ENCODE measurements at regions of chr16 and their contacts with region 1.

Region 1: DNA sequence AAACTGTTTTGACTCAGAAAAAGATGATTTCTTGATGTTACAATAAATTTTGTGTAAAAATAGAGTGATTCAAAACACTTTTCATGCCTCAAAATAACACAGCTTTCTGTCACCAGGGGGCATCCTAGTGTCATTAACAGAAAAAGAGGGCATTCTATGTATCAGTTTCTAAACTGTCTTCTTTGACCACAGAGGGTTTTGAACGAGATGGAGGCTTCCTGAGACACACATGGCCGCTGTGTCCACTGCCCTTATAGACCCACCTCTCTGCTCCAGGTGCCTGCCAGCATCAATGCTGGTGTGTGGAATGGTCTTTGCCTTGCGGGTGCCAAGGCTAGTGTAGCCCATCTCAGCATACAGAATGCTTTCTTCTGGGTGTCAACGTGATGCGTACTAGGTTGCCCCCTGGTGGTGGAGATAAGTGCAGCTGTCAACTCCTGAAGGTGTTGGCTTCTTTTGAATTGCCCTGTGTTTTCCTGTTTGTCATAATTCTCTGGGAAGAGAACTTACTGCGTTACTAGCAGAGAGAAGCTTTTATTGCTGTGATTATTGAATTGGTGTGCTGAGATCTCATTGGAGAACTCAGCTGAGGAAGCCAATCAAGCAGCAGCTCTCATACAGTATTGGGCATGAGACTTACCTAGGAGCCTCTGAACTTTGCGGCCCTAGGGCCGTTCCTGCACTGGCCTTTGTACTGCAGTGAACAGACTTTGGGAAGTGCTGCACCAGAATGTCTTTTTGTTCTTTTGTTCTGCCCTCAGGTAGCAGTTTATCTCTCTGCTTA is 38.6 kb downstream of the USP10 start:
- DNase-seq: peak; percentile 82 to 86
- H3K4me3 ChIP-seq: no peak overlapping the region
- H3K4me3 Mint-ChIP-seq: no peak overlapping the region
- H3K27ac Mint-ChIP-seq: no peak overlapping the region
- H3K4me1 ChIP-seq: peaks cover 7% of the 10 kb centered on the region; the same call in 1 of the 2 replicates
- H3K4me1 Mint-ChIP-seq: peaks cover 25% of the 10 kb centered on the region
- H3K27me3 ChIP-seq: no peaks in the 10 kb centered on the region
- H3K27me3 Mint-ChIP-seq: no peaks in the 10 kb centered on the region
- CTCF ChIP-seq: peak; percentile 91 to 92

Region 2: DNA sequence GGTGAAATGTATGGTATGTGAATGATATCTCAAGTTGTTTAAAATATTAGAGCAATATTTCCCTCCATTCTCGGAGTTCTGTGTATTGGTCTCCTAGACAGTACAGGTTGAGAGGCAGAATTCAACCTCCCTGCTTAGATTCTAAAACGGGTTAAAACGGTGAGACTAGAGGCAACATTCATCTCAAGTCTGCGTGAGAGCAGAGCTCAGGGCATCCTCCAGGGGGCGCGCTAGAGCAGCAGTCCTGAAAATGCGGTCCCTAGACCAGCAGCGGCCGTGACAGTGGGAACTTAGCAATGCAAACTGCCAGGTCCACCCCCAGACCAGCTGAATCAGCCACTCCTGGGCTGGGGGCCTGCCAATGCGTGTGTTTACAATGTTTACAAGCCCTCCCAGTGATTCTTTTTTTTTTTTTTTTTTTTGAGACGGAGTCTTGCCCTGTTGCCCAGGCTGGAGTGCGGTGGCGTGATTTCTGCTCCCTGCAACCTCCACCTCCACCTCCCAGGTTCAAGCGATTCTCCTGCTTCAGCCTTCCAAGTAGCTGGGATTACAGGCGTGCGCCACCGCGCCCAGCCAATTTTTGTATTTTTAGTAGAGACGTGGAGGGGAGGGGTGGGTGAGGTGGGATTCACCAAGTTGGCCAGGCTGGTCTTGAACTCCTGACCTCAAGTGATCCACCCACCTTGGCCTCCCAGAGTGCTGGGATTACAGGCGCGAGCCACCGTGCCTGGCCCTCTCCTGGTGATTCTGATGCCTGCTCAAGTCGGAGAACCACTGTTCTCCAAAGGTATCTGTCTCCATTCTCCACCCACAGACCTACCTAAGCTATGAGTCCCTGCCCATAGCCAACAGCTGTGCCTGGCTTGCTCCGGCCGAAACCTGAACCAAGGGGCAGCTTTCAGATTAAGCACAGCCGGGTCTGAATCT is 65.9 kb before region 1 on chr16:
- CTCF ChIA-PET with region 1: interaction called, 17 read pairs
- POLR2A ChIA-PET with region 1: no interaction called
- intact Hi-C with region 1: loop called (anchors 1 kb)
- DNase-seq: peak; percentile 81 to 89
- H3K4me3 ChIP-seq: no peak overlapping the region
- H3K4me3 Mint-ChIP-seq: no peak overlapping the region
- H3K27ac Mint-ChIP-seq: no peak overlapping the region
- H3K4me1 ChIP-seq: peaks cover 3% of the 10 kb centered on the region; the same call in 1 of the 2 replicates
- H3K4me1 Mint-ChIP-seq: no peaks in the 10 kb centered on the region
- H3K27me3 ChIP-seq: no peaks in the 10 kb centered on the region
- H3K27me3 Mint-ChIP-seq: no peaks in the 10 kb centered on the region
- CTCF ChIP-seq: peak; percentile 97 to 98